ENCODE measurements at regions of chr1 and their contacts with region 1.

Region 1: DNA sequence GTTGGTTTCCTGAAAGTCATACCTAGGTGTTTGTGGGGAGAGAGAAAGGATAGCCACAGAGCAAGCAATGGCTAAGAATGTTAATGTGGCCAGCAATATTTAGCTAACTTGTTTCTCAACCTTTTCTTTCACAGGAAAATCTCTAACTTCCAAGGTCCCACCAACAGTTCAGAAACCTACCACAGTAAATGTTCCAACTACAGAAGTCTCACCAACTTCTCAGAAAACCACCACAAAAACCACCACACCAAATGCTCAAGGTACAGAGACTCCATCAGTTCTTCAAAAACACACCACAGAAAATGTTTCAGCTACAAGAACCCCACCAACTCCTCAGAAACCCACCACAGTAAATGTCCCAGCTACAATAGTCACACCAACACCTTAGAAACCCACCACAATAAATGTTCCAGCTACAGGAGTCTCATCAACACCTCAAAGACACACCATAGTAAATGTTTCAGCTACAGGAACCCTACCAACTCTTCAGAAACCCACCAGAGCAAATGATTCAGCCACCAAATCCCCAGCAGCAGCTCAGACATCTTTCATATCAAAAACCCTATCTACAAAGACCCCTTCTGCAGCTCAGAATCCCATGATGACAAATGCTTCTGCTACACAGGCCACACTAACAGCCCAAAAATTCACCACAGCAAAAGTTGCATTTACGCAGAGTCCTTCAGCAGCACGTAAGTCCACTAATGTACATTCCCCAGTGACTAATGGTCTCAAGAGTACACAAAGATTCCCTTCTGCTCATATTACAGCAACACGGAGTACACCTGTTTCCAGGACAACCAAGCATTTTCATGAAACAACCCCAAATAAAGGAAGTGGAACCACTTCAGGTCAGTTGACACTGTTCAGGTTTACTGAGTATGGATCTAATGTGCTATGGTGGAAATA is 15.3 kb downstream of the CD55 start:
- DNase-seq: peak in 8 of 9 donors; percentile 42 to 67 (median 55)
- ATAC-seq: peak; percentile 56
- H3K4me3 ChIP-seq: peak overlapping the region; percentile 31
- H3K4me3 Mint-ChIP-seq: peak overlapping the region; percentile 35 to 78 (median 71)
- H3K27ac ChIP-seq: peak overlapping the region; percentile 65
- H3K27ac Mint-ChIP-seq: peak overlapping the region; percentile 70 to 94 (median 88)
- H3K4me1 ChIP-seq: peaks cover 24 to 38% of the 10 kb centered on the region in 2 donors
- H3K4me1 Mint-ChIP-seq: peaks cover 46 to 86% (median 74%) of the 10 kb centered on the region in 7 donors
- H3K27me3 ChIP-seq: no peaks in the 10 kb centered on the region
- H3K27me3 Mint-ChIP-seq: no peaks in the 10 kb centered on the region

Region 2: GRCh38 chr1:207084701-207085180 is 252.1 kb before region 1 on chr1:
- CTCF ChIA-PET with region 1: no interaction called
- POLR2A ChIA-PET with region 1: no interaction called
- intact Hi-C with region 1: loop called (anchors 5 kb)
- DNase-seq: peak in 8 of 9 donors; percentile 43 to 71 (median 62)
- ATAC-seq: peak; percentile 67
- H3K4me3 ChIP-seq: no peak overlapping the region
- H3K4me3 Mint-ChIP-seq: no peak overlapping the region
- H3K27ac ChIP-seq: no peak overlapping the region
- H3K27ac Mint-ChIP-seq: peak overlapping the region in 5 of 9 donors; percentile 5 to 78 (median 53)
- H3K4me1 ChIP-seq: peaks cover 0 to 15% of the 10 kb centered on the region in 2 donors
- H3K4me1 Mint-ChIP-seq: peaks cover 3 to 33% (median 32%) of the 10 kb centered on the region in 7 donors
- H3K27me3 ChIP-seq: no peaks in the 10 kb centered on the region
- H3K27me3 Mint-ChIP-seq: peaks cover 0 to 34% (median 0%) of the 10 kb centered on the region in 5 donors

Region 3: GRCh38 chr1:207181838-207182237 is 155.0 kb before region 1 on chr1:
- CTCF ChIA-PET with region 1: interaction called, 10 read pairs
- POLR2A ChIA-PET with region 1: no interaction called
- intact Hi-C with region 1: loop called in 1 of 2 experiments (anchors 5 kb)
- DNase-seq: peak in 5 of 9 donors; percentile 5 to 35 (median 10)
- ATAC-seq: no peak
- H3K4me3 ChIP-seq: no peak overlapping the region
- H3K4me3 Mint-ChIP-seq: no peak overlapping the region
- H3K27ac ChIP-seq: no peak overlapping the region
- H3K27ac Mint-ChIP-seq: no peak overlapping the region
- H3K4me1 ChIP-seq: no peaks in the 10 kb centered on the region
- H3K4me1 Mint-ChIP-seq: peaks cover 0 to 5% (median 0%) of the 10 kb centered on the region in 7 donors
- H3K27me3 ChIP-seq: no peaks in the 10 kb centered on the region
- H3K27me3 Mint-ChIP-seq: peaks cover 0 to 39% (median 9%) of the 10 kb centered on the region in 5 donors

Region 4: DNA sequence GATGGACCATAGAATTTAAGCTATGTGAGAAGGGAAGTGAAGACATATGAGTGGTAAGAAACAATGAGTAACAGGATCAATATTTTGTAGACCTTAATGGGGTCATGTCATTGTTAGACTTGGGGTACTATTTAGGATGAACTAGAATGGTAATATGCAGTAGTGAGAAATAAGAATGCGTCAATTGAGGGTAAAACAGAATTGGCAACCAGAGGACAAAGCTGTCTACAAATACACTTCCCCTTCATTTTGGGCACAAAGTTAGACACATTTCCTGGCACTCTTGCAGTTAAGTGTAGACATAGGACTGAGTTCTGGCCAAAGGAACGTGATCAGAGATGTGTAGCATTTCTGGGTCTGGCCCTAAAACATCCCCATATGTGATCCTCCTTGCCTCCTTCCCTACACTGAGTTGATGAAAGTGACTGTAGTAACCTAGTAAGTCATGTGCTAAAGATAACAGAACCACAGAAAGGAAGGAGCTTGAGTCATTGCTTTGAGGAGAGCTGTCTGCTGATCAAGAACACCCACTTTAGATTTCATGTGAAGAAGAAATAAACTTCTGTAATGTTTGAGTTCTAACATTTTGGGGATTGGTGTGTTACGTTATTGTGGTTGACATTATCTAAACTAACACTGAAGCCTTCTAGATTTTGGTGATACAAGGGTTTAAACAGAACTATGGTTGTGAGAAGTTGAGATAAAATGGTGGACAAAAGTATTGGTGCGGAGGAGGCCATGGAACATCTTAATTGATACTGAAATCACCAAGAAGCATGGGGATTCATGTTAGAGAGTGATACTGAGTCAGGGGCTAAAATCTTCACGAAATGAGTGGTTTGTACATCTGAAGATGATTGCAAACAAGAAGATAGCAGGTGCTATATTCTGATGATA is 26.4 kb after region 1 on chr1:
- CTCF ChIA-PET with region 1: no interaction called
- POLR2A ChIA-PET with region 1: no interaction called
- intact Hi-C with region 1: loop called in 1 of 2 experiments (anchors 1 kb)
- DNase-seq: peak in 7 of 9 donors; percentile 24 to 66 (median 38)
- ATAC-seq: peak; percentile 92
- H3K4me3 ChIP-seq: no peak overlapping the region
- H3K4me3 Mint-ChIP-seq: no peak overlapping the region
- H3K27ac ChIP-seq: peak overlapping the region; percentile 20
- H3K27ac Mint-ChIP-seq: no peak overlapping the region
- H3K4me1 ChIP-seq: peaks cover 0 to 5% of the 10 kb centered on the region in 2 donors
- H3K4me1 Mint-ChIP-seq: peaks cover 0 to 14% (median 10%) of the 10 kb centered on the region in 7 donors
- H3K27me3 ChIP-seq: no peaks in the 10 kb centered on the region
- H3K27me3 Mint-ChIP-seq: no peaks in the 10 kb centered on the region

Region 5: GRCh38 chr1:207374887-207375286 is 38.1 kb after region 1 on chr1:
- CTCF ChIA-PET with region 1: no interaction called
- POLR2A ChIA-PET with region 1: no interaction called
- intact Hi-C with region 1: loop called in 1 of 2 experiments (anchors 5 kb)
- DNase-seq: no peak
- ATAC-seq: no peak
- H3K4me3 ChIP-seq: no peak overlapping the region
- H3K4me3 Mint-ChIP-seq: no peak overlapping the region
- H3K27ac ChIP-seq: no peak overlapping the region
- H3K27ac Mint-ChIP-seq: peak overlapping the region in 3 of 9 donors; percentile 22 to 56 (median 26)
- H3K4me1 ChIP-seq: no peaks in the 10 kb centered on the region
- H3K4me1 Mint-ChIP-seq: peaks cover 0 to 9% (median 3%) of the 10 kb centered on the region in 7 donors
- H3K27me3 ChIP-seq: no peaks in the 10 kb centered on the region
- H3K27me3 Mint-ChIP-seq: no peaks in the 10 kb centered on the region

Measured in naive thymus-derived CD4-positive, alpha-beta T cell (primary cell).